HepG2 (cell line): ENCODE measurements at regions of chr6 and their contacts with region 1.

Region 1: DNA sequence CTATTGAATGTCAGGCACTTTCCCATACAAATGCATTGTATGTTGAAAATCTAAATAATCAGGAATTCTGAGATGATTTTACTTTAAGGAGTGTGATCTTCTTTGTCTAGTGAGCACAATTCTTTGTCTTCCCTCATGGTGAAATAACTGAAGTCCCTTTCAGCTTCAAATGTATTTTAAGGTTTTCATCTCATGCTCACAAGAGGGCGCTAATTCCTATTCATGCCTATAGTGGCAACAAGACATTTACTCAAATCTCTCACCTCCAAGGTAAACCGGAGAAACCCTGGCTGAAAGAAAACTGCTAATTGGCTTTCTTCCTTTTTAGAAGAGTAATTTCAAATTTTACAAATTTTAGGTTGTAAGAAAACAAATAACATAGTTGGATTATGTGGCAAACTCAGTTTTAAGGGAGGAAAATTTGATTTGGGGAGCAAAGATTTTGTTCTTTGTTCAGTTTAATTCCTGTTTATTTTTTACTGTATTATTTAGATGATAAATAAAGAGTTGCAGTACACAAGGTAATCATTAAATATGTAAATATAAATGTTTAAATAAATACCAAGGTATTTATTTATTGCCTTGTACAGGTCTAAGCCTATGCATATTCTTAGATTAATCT is 69.1 kb downstream of the SLC35F1 start:
- DNase-seq: peak; percentile 61
- ATAC-seq: peak; percentile 71; the same call in 2 of the 3 replicates
- H3K4me3 ChIP-seq: no peak overlapping the region
- H3K27ac ChIP-seq: no peak overlapping the region
- H3K4me1 ChIP-seq: no peaks in the 10 kb centered on the region
- H3K27me3 ChIP-seq: no peaks in the 10 kb centered on the region
- CTCF ChIP-seq: peak; percentile 78
- EP300 ChIP-seq: no peak
- POLR2A ChIP-seq: no peak
- RAD21 ChIP-seq: peak; percentile 38; the same call in 1 of the 2 replicates

Region 2: GRCh38 chr6:118263921-118264486 is 287.9 kb after region 1 on chr6:
- CTCF ChIA-PET with region 1: no interaction called
- POLR2A ChIA-PET with region 1: no interaction called
- in situ Hi-C with region 1: no loop called
- intact Hi-C with region 1: loop called (anchors 1 kb)
- DNase-seq: peak; percentile 30
- ATAC-seq: peak; percentile 86
- H3K4me3 ChIP-seq: no peak overlapping the region
- H3K27ac ChIP-seq: no peak overlapping the region
- H3K4me1 ChIP-seq: no peaks in the 10 kb centered on the region
- H3K27me3 ChIP-seq: no peaks in the 10 kb centered on the region
- CTCF ChIP-seq: peak; percentile 44
- EP300 ChIP-seq: no peak
- POLR2A ChIP-seq: no peak
- RAD21 ChIP-seq: no peak

Region 3: GRCh38 chr6:118551063-118552053 is 575.2 kb after region 1 on chr6:
- CTCF ChIA-PET with region 1: interaction called, 5 read pairs
- POLR2A ChIA-PET with region 1: no interaction called
- in situ Hi-C with region 1: no loop called
- intact Hi-C with region 1: loop called (anchors 1 kb)
- DNase-seq: peak; percentile 44
- ATAC-seq: peak; percentile 93
- H3K4me3 ChIP-seq: no peak overlapping the region
- H3K27ac ChIP-seq: no peak overlapping the region
- H3K4me1 ChIP-seq: no peaks in the 10 kb centered on the region
- H3K27me3 ChIP-seq: no peaks in the 10 kb centered on the region
- CTCF ChIP-seq: peak; percentile 60
- EP300 ChIP-seq: no peak
- POLR2A ChIP-seq: no peak
- RAD21 ChIP-seq: peak; percentile 48; the same call in 1 of the 2 replicates

Region 4: DNA sequence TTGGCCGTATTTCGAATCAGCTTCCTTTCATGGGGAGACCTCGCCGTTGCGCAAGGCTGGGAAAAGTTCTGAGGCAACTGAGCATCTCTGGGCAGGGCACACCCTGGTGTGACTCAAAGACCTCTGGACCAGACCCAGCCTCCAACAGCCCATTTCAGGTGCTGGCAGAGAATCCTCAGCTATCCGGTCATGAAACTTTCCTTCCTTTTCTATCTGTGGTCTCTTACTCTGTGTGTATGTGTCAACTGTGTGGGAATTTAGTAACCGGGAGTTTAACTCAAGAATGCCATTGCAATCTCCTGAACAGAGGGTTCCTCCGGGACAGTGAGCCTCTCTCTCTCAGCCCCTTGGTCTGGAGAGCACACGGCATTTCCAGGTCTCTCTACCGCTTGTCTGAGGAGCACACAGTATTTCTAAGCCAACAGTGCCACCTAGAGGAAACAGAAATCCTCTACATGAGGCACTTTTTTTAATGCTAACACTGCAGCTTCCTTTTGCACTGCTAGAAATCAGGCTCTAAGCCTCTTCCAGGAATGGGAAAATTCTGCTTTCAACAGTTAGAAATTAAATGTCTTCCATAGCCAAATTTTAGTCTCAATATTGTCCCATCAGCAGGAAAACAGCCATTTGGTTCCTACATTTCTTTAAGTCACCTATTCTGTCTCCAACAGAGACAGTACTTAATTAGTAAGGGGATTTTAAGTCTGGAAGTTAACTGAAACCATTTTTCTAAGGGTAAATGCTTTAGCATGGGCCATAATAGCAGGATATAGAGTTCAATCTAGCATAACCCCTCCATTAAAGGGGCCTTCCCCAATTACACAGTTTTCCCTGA is 604.7 kb after region 1 on chr6:
- CTCF ChIA-PET with region 1: interaction called, 25 read pairs
- POLR2A ChIA-PET with region 1: no interaction called
- in situ Hi-C with region 1: loop called (anchors 25 kb)
- intact Hi-C with region 1: loop called (anchors 1 kb)
- DNase-seq: peak; percentile 75
- ATAC-seq: peak; percentile 97
- H3K4me3 ChIP-seq: no peak overlapping the region
- H3K27ac ChIP-seq: no peak overlapping the region
- H3K4me1 ChIP-seq: no peaks in the 10 kb centered on the region
- H3K27me3 ChIP-seq: no peaks in the 10 kb centered on the region; a peak in 1 of 5 replicates
- CTCF ChIP-seq: peak; percentile 92
- EP300 ChIP-seq: no peak
- POLR2A ChIP-seq: no peak
- RAD21 ChIP-seq: peak; percentile 88